Posterior vena cava (tissue), 2 donors: ENCODE measurements at regions of chr1 and their contacts with region 1.

Region 1: DNA sequence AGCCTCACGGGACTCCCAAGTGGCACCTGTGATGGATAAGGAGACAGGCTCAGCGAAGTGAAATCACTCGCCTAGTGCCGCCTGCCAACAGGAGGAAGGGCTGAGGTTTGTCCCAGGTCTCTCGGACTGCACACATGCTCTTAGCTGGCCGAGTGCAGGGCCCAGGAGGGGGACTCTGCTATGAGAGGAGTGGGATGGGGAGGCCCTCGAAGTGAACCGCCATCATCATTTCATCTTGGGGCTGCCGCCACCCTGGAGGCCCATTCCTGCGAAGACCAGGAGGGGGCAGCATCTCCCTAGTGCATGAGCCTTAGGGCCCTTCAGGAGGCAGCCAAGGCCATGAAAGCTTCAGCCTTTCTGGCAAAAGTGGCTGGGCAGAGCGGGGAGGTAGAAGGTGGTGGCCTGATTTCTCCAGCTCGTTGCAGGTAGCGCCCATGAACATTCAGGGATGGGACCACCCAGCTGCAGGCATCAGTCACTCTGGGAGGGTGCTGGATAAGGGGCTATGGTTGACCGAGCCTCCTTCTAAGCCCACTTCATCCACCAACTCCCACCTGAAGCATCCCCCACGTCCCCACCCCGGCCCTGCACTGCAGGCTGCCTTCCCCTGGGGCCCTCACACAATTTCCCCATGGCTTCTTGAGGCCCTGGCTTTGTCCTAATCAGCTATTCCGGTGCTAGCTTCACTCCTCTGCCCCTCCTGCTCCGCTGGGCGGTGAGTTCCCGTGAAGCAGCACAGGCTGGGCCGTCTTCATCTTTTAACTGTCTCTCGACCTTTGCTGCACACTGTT is 17.2 kb upstream of the RASSF5 start:
- DNase-seq: peak; percentile 92

Region 2: GRCh38 chr1:205840146-205840923 is 649.8 kb before region 1 on chr1:
- intact Hi-C with region 1: no loop called
- DNase-seq: no peak

Region 3: DNA sequence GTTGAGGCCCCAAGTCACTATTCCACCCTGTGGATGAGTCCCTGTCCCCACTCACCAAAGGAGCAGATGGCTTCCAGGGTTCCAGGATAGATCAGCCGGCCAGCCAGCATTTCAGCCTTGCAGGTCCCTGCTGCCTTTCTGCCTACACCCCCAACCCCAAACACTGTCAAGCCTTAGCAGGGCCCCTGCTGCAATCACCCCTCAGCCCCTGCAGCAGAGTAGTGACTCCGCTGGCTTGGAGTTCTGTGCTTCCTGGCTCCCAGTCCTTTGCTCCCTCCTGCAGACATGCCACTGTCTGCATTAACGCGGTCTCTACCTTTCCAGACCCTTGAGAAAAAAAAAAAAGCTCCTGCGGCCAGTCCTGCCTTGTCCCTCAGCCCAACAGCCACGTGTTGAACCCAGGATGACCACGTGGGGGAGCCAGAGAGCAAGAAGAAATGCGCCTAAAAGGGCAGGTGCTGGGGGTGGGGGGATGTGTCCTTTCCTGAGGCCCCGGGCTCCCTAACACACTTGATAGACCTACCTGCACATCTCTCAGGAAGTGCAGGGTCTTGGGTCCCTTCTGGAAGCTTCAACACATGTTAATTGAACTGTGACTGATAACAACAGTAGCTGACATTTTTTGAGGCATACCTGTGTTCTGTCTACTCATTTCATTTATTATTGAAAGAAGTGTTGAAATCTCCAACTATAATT is 54.5 kb after region 1 on chr1:
- intact Hi-C with region 1: loop called in 1 of 2 experiments (anchors 10 kb)
- DNase-seq: peak; percentile 88

Region 4: GRCh38 chr1:206583707-206584648 is 93.8 kb after region 1 on chr1:
- intact Hi-C with region 1: loop called (anchors 2 to 5 kb)
- DNase-seq: peak; percentile 93